GM13977 (cell line): ENCODE measurements at regions of chr1 and their contacts with region 1.

Region 1: GRCh38 chr1:91282695-91283420 is 121.8 kb downstream of the HFM1 start:
- DNase-seq: peak; percentile 50
- CTCF ChIP-seq: peak; percentile 82

Region 2: DNA sequence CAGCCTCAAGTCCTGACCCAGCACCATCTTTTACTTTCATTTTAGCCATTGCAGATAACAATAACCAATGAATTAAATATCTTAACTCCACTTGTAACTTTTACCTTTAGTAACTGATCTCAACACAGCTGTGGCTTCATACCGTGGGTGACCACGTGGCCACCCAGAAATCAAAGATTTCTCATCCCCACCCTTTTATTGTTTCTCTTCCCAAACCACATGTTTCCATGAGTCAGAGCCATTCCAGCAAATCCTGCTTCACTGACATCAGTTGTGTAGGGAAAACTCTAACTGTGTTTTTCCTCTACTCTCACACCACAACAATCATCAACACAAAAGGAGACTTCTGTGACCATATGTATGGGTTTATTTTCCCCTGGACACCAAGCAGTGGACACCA is 641.3 kb after region 1 on chr1:
- in situ Hi-C with region 1: loop called (anchors 10 kb)
- DNase-seq: no peak
- CTCF ChIP-seq: no peak